CD8-positive, alpha-beta T cell (primary cell): ENCODE measurements at regions of chr6 and their contacts with region 1.

Region 1: DNA sequence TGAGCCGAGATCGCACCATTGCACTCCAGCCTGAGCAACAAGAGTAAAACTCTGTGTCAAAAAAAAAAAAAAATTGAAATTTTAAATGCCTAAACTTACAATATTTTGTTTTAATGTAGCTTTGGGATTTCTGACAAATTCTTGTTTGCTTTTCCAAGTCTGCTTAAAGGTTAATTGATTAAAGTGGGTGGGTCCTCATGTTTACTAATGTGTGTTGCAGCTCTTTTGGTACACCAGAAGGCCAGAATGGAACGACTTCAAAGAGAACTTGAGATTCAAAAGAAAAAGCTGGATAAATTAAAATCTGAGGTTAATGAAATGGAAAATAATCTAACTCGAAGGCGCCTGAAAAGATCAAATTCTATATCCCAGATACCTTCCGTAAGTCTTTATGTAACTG is 2.7 kb upstream of the SUMO4 start:
- DNase-seq: no peak
- ATAC-seq: no peak
- H3K4me3 ChIP-seq: no peak overlapping the region
- H3K4me3 Mint-ChIP-seq: no peak overlapping the region
- H3K27ac ChIP-seq: no peak overlapping the region
- H3K27ac Mint-ChIP-seq: peak overlapping the region; percentile 27
- H3K4me1 ChIP-seq: peaks cover 9% of the 10 kb centered on the region
- H3K4me1 Mint-ChIP-seq: peaks cover 37% of the 10 kb centered on the region
- H3K27me3 ChIP-seq: no peaks in the 10 kb centered on the region
- H3K27me3 Mint-ChIP-seq: no peaks in the 10 kb centered on the region
- CTCF ChIP-seq: no peak

Region 2: DNA sequence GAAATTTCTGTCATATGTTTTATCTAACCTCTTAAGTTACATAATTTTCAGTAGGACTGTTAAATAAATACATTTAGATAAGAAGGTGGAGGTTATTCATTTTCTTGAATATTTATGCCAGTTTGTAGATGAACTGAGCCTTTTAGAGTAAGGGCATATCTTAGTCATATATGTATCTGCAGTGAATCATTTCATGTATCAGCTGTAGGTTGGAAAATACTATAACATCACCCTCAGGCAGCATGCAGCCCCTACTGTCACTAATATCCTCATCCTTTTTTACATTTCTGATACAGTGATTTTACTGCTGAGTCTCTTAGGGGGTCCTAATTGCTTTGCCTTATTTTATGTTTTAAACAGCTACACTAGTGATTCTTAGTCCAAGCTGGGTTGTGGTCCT is 16.9 kb before region 1 on chr6:
- CTCF ChIA-PET with region 1: no interaction called
- POLR2A ChIA-PET with region 1: interaction called, 3 read pairs
- intact Hi-C with region 1: loop called in 1 of 2 experiments (anchors 2 kb)
- DNase-seq: no peak
- ATAC-seq: no peak
- H3K4me3 ChIP-seq: no peak overlapping the region
- H3K4me3 Mint-ChIP-seq: no peak overlapping the region
- H3K27ac ChIP-seq: no peak overlapping the region
- H3K27ac Mint-ChIP-seq: no peak overlapping the region
- H3K4me1 ChIP-seq: peaks cover 4% of the 10 kb centered on the region
- H3K4me1 Mint-ChIP-seq: peaks cover 48% of the 10 kb centered on the region
- H3K27me3 ChIP-seq: no peaks in the 10 kb centered on the region
- H3K27me3 Mint-ChIP-seq: no peaks in the 10 kb centered on the region
- CTCF ChIP-seq: no peak

Region 3: GRCh38 chr6:149410557-149410956 is 13.2 kb after region 1 on chr6:
- CTCF ChIA-PET with region 1: no interaction called
- POLR2A ChIA-PET with region 1: no interaction called
- intact Hi-C with region 1: loop called in 1 of 2 experiments (anchors 2 kb)
- DNase-seq: no peak
- ATAC-seq: no peak
- H3K4me3 ChIP-seq: no peak overlapping the region
- H3K4me3 Mint-ChIP-seq: no peak overlapping the region
- H3K27ac ChIP-seq: no peak overlapping the region
- H3K27ac Mint-ChIP-seq: peak overlapping the region; percentile 15
- H3K4me1 ChIP-seq: no peaks in the 10 kb centered on the region
- H3K4me1 Mint-ChIP-seq: peaks cover 1% of the 10 kb centered on the region
- H3K27me3 ChIP-seq: no peaks in the 10 kb centered on the region
- H3K27me3 Mint-ChIP-seq: no peaks in the 10 kb centered on the region
- CTCF ChIP-seq: no peak

Region 4: DNA sequence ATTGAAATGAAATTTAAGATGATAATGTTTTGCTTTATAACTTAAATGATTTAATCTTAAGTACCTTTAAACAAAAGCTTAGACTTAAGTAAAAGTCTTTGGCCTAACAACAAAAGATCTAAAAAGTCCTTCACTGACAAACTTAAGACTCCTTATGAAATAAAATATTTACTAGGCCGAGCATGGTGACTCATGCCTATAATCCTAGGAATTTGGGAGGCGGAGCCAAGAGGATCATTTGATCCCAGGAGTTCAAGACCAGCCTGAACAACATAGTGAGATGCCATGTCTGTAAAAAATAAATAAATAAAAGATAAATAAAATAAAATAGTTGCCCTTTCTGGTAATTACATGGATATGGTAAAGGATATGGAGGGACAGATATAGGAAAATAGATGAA is 238.7 kb after region 1 on chr6:
- CTCF ChIA-PET with region 1: no interaction called
- POLR2A ChIA-PET with region 1: no interaction called
- intact Hi-C with region 1: no loop called
- DNase-seq: no peak
- ATAC-seq: no peak
- H3K4me3 ChIP-seq: no peak overlapping the region
- H3K4me3 Mint-ChIP-seq: no peak overlapping the region
- H3K27ac ChIP-seq: no peak overlapping the region
- H3K27ac Mint-ChIP-seq: no peak overlapping the region
- H3K4me1 ChIP-seq: no peaks in the 10 kb centered on the region
- H3K4me1 Mint-ChIP-seq: peaks cover 3% of the 10 kb centered on the region
- H3K27me3 ChIP-seq: no peaks in the 10 kb centered on the region
- H3K27me3 Mint-ChIP-seq: no peaks in the 10 kb centered on the region
- CTCF ChIP-seq: no peak